Thyroid gland (tissue), 4 donors: ENCODE measurements at regions of chr18 and their contacts with region 1.

Region 1: GRCh38 chr18:36757081-36757480 is 71.7 kb downstream of the TPGS2 start:
- DNase-seq: no peak
- H3K4me3 ChIP-seq: no peak overlapping the region
- H3K27ac ChIP-seq: no peak overlapping the region
- H3K4me1 ChIP-seq: no peaks in the 10 kb centered on the region
- H3K27me3 ChIP-seq: no peaks in the 10 kb centered on the region
- CTCF ChIP-seq: peak; percentile 31 to 73 (median 56)
- POLR2A ChIP-seq: no peak

Region 2: DNA sequence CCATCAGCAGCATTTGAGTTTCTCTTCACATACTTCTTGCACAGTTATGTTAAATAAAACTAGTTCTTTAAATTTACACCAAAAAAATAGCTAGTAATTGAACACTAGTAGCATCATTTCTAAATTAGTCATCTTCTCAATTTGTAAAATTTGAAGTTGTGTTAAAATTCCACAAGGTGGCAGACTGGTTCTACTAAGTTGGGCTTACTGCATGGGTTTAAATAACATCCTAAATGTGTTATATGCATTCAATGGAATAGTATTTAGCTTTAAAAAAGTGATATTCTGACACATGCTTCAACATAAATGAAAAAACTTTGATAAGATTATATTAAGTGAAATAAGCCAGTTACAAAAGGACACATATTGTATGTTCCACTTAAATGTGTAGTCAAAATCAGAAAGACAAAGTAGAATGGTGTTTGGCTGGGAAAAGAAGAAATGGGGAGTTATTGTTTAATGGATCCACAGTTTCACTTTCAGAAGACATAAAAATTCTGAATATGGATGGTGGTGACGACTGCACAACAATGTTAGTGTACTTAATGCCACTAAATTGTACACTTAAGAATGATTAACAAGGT is 661.1 kb before region 1 on chr18:
- intact Hi-C with region 1: loop called (anchors 10 kb)
- DNase-seq: no peak
- H3K4me3 ChIP-seq: no peak overlapping the region
- H3K27ac ChIP-seq: no peak overlapping the region
- H3K4me1 ChIP-seq: no peaks in the 10 kb centered on the region
- H3K27me3 ChIP-seq: no peaks in the 10 kb centered on the region
- CTCF ChIP-seq: peak in 4 of 6 experiments; percentile 51 to 57 (median 54)
- POLR2A ChIP-seq: no peak

Region 3: DNA sequence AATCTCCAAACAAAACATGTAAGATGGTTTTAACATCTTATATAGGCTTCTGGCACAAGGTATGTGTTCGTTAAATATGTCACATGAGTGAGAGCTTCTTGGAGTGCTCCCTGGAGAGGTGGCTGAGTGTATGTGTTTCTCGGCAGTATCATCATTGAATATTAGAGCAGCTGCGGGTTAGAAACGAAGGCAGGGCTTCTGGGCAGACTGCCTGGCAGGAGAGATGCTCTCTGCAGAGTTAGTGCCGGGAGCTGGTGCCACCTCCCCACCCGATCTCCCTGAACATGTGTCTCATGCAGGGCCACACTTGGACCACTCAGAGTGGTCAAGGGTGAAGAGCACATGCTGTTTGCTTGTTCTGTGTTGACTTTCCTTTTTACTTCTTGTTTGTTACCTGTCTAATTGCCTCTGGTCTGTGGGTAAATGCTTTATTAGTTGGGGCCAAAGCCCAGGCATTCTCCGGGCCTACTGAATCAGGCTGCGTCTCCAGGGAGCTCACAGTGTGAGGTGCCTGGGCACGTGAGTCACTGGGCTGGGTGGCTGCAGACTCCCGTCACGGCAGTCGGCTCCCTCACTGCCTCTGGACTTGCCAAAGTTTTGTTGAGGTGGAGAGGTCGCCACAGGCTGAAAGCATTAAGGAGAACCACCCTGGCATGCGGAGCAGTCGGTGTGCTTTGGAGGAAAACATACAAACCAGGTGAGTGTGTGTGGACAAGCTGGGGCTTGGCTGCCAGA is 212.9 kb before region 1 on chr18:
- intact Hi-C with region 1: no loop called
- DNase-seq: peak; percentile 89 to 91
- H3K4me3 ChIP-seq: no peak overlapping the region
- H3K27ac ChIP-seq: peak overlapping the region; percentile 27 to 75 (median 65)
- H3K4me1 ChIP-seq: peaks cover 0 to 10% of the 10 kb centered on the region in 2 donors
- H3K27me3 ChIP-seq: no peaks in the 10 kb centered on the region
- CTCF ChIP-seq: no peak
- POLR2A ChIP-seq: no peak